Left ventricle myocardium superior (tissue), 1 donor: ENCODE measurements at regions of chr7 and their contacts with region 1.

Region 1: GRCh38 chr7:15015545-15016326 is 113.2 kb upstream of the DGKB start:
- DNase-seq: no peak
- ATAC-seq: peak; percentile 97

Region 2: GRCh38 chr7:14717816-14718215 is 297.9 kb before region 1 on chr7:
- intact Hi-C with region 1: loop called (anchors 2 kb)
- DNase-seq: no peak
- ATAC-seq: no peak

Region 3: DNA sequence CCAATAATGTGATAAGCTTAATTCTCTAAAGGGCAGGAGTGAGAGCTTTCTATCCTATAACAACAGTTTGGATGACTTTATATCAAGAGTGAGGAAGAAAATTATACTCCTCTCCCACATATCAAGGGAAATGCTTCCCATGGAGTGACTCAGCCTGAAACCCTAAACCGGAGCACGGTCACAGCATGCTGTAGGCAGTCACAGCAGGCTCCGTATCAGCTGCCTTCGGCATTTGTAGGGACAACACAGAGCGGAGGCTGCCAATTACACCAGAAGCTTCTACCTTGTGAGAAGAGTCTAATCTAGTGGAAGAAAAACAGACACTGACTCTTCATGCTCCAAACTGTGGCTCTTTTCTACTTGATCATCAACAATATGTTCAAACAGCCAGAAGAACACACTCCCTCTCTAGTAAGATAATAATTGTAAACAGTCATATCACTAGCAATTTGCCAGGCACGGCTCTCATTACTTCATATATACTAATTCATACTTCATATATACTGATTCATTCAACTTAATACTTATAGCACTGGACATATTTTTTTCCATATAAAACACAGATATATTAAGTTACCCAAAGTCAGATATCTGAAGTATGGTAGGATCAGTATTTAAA is 179.1 kb before region 1 on chr7:
- intact Hi-C with region 1: loop called (anchors 10 kb)
- DNase-seq: peak; percentile 57
- ATAC-seq: peak; percentile 88